ENCODE measurements at regions of chr15 and their contacts with region 1.

Region 1: GRCh38 chr15:77034695-77035489 is 36.0 kb downstream of the TSPAN3 start:
- DNase-seq: peak in 6 of 7 donors; percentile 26 to 58 (median 38)
- H3K4me3 ChIP-seq: no peak overlapping the region
- H3K27ac ChIP-seq: no peak overlapping the region
- H3K4me1 ChIP-seq: no peaks in the 10 kb centered on the region
- H3K27me3 ChIP-seq: no peaks in the 10 kb centered on the region
- CTCF ChIP-seq: peak; percentile 25 to 60 (median 46)
- POLR2A ChIP-seq: no peak

Region 2: GRCh38 chr15:76939715-76940114 is 95.2 kb before region 1 on chr15:
- intact Hi-C with region 1: no loop called
- DNase-seq: no peak
- H3K4me3 ChIP-seq: no peak overlapping the region
- H3K27ac ChIP-seq: no peak overlapping the region
- H3K4me1 ChIP-seq: no peaks in the 10 kb centered on the region
- H3K27me3 ChIP-seq: no peaks in the 10 kb centered on the region
- CTCF ChIP-seq: no peak
- POLR2A ChIP-seq: no peak

Region 3: DNA sequence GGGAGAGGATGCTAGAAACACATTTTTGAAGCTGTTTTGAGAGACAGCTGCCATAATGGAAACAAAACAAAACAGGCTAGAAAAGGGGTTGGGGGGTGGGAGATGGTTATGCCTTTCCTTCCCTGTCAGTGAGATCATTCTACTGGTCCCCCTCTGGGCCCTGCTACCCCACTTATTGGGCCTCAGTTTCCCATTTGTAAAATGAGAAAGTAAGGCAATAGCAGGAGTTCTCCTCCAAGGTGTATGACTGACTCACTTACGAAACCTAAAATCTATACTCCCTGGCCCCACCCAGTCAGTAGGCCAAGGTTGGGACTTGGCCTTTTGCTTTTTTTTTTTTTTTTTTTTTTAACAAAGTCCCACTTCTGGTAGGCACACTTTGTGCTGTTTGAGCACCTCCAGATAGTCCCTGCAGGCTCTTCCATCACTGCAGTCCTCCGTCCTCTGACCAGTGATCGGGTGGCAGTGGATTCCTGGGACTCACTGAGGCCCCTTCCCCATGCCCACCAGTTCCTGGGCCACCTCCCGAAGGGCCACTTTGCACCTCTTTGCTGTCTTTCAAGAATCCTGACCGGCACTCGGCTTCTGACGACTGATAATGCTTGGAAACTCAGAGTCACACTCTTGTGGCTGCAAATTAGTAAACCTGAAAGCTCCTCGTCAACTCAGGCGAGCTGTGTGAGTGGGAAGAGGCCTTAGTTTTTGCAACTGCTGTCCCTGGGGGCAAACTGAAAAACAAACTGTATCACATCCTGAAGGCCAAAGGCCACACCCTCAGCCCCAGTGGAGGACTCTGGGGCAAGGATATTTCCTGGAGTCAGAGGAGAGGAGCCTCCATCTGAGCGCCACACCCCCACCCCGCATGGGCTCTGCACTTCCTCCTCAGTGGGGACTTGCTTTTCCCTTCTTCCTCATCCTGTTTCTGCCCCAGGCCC is 46.7 kb before region 1 on chr15:
- intact Hi-C with region 1: loop called in 1 of 2 experiments (anchors 10 kb)
- DNase-seq: peak in 6 of 7 donors; percentile 1 to 64 (median 42)
- H3K4me3 ChIP-seq: no peak overlapping the region
- H3K27ac ChIP-seq: peak overlapping the region in 2 of 5 donors; percentile 41 to 72
- H3K4me1 ChIP-seq: no peaks in the 10 kb centered on the region
- H3K27me3 ChIP-seq: no peaks in the 10 kb centered on the region
- CTCF ChIP-seq: no peak
- POLR2A ChIP-seq: no peak

Region 4: DNA sequence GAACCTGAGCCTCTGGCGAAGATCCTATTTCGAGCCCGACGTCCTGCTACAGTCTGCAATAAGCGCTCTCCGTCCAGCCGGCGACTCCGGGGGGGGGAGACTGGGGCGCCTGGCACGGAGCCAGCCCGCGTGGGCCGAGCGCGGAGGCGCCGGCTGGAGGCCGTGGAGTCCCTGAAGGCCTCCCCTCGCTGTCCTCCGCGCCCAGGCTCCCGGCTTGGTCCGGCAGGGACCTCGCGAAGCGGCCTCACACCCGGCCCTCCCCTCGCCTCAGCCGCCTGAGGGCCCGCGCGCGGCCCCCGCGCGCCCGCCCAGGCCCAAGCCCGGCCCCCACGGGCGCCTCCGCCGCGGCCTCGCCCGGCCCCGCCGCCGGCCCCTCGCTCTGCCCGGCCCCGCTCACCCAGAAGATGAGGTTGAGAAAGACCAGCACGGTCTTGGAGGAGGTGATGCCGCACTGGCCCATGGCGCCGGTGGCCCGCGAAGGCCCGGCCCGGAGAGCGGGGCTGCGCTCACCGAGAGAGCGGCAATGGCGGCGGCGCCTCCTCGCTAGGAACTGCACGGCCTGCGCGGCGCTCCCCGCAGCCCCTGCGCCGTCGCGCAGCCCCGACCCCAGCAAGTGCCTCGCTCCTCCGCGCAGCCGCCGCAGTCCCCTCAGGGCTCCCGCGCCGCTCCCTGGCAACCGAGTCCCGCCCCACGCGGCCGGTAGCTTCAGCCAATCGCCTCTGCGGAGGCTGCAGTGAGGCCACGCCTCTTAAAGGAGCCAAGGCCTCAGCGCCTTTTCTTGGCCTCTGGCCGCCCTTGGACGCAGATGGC is 35.8 kb after region 1 on chr15 and contains the start of gene TSPAN3:
- intact Hi-C with region 1: loop called in 1 of 2 experiments (anchors 5 kb)
- DNase-seq: peak; percentile 92 to 96 (median 94)
- H3K4me3 ChIP-seq: peak within 1 kb of the TSS; percentile 59 to 86 (median 72)
- H3K27ac ChIP-seq: peak within 1 kb of the TSS in 4 of 5 donors; percentile 86 to 94 (median 88)
- H3K4me1 ChIP-seq: peaks cover 4 to 29% of the 10 kb centered on the region in 2 donors
- H3K27me3 ChIP-seq: no peaks in the 10 kb centered on the region
- CTCF ChIP-seq: no peak
- POLR2A ChIP-seq: peak; percentile 83 to 91
- total RNA-seq, gene TSPAN3: 181 to 464 (median 257) TPM